ENCODE measurements at regions of chr20 and their contacts with region 1.

Region 1: DNA sequence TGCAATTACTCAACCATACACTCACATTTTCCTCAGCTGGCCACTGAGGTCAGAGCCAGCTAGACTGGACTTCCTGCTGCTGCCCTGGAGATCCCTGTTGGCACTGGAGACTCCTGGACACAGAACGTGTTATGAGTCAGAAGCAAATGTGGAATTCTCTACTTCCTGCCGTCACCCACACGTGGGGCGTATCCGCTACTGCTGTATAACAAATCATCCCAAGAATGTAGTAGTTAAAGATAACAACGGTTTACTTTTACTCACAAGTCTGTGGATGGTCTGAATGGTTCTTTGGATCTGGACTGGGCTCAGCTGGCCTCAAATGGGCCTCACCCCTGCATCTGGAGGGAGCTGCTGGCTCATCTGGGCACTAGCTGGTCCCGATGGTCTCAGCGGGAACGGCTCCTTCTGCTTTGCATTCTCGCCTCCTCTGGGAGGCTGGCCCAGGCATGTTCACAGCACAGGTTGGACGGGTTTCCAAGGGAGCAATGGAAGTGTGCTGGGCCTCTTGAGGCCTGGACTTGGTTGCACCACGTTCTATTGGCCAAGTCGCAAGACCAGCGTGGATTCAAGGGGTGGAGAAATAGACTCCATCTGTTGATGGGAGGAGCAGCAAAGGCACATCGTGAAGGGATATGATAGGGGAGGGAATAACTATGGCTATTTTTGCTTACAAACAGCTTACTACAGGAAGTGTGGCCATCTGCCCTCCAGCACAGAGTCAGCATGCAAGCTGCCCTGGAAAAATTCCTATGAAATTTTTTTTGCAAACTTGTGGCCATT is 118.5 kb downstream of the SNX5 start:
- DNase-seq: peak; percentile 97
- H3K4me3 ChIP-seq: no peak overlapping the region
- H3K27ac ChIP-seq: peak overlapping the region; percentile 80
- H3K4me1 ChIP-seq: peaks cover 26% of the 10 kb centered on the region
- H3K27me3 ChIP-seq: no peaks in the 10 kb centered on the region
- CTCF ChIP-seq: no peak
- POLR2A ChIP-seq: no peak

Region 2: GRCh38 chr20:17747431-17747867 is 102.6 kb before region 1 on chr20:
- CTCF ChIA-PET with region 1: no interaction called
- POLR2A ChIA-PET with region 1: no interaction called
- dilution Hi-C with region 1: no loop called
- intact Hi-C with region 1: loop called (anchors 1 kb)
- DNase-seq: peak; percentile 85
- H3K4me3 ChIP-seq: no peak overlapping the region
- H3K27ac ChIP-seq: peak overlapping the region; percentile 43
- H3K4me1 ChIP-seq: peaks cover 24% of the 10 kb centered on the region
- H3K27me3 ChIP-seq: no peaks in the 10 kb centered on the region
- CTCF ChIP-seq: no peak
- POLR2A ChIP-seq: no peak

Region 3: DNA sequence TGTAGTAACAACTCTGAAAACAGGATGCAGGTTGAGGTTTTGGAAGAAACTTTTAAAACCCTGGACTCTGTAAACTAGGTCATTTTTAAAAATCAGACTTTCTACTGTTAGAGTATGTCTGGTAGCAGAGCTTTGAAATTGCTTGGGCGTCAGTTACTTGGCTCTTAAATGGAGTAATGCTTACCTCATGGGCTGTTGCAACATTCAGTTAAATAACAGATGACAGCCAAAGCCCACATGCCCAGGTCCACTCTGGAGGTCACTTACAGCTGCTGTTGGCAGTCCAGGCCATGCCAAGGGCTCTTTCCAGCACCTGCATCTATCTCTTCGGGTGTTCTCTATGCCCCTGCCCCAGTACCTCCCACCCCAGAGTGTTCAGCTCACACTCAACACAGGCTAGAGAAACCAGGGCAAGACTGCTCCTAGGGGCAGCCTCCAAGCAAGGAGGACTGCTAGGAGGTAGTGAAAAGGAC is 54.0 kb before region 1 on chr20:
- CTCF ChIA-PET with region 1: no interaction called
- POLR2A ChIA-PET with region 1: no interaction called
- dilution Hi-C with region 1: no loop called
- intact Hi-C with region 1: no loop called
- DNase-seq: peak; percentile 57
- H3K4me3 ChIP-seq: no peak overlapping the region
- H3K27ac ChIP-seq: no peak overlapping the region
- H3K4me1 ChIP-seq: no peaks in the 10 kb centered on the region
- H3K27me3 ChIP-seq: peaks cover 8 to 9% of the 10 kb centered on the region in 2 experiments
- CTCF ChIP-seq: no peak
- POLR2A ChIP-seq: no peak